GM12878 (cell line): ENCODE measurements at regions of chr5 and their contacts with region 1.

Region 1: DNA sequence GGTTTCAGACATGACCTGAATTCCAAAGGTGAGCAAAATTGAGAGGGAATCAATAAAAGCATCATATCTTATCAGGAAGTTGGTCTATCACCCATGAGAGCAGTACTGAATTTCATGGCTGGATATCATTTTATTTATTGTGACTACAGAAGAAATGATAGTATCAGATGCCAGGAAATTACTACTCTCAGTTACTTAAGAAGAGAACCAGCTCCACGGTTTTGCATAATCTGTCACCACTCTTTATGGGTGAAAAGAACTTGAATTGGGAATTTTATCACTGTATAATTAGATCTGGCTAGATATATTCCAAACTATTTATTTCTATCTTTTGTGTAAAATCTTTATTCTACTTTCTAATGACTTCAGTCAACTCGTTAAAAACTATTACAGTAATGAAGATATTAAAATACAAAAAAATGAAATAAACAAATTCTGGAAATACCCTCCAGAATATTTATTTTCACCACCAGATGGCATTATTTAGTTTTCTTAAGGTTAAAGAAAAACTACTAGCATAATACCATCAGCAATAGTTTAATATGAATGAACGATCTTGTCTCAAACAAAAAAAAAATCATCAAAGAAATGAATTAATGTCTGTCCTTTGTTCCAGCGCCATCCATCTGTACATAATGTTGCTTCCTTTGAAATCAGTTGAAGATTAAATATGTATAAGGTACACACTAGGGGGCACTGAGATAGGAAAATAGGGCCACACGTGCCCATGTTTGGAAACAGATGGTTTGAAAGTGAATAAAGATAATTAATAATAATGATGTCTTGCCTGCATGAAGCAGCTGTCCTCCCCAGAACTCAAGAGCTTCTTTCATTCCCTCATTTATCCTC is 84.7 kb upstream of the SLCO6A1 start:
- DNase-seq: no peak
- ATAC-seq: peak; percentile 34; the same call in 1 of the 3 replicates
- H3K4me3 ChIP-seq: no peak overlapping the region
- H3K27ac ChIP-seq: no peak overlapping the region
- H3K4me1 ChIP-seq: no peaks in the 10 kb centered on the region
- H3K27me3 ChIP-seq: no peaks in the 10 kb centered on the region
- CTCF ChIP-seq: peak in 2 of 3 experiments; percentile 23 to 32; a peak in 3 of 6 replicates
- EP300 ChIP-seq: no peak
- POLR2A ChIP-seq: no peak
- RAD21 ChIP-seq: 0 out of 2 replicates have a peak, but pooled peaks have one; percentile 6

Region 2: GRCh38 chr5:102596113-102596512 is 12.6 kb after region 1 on chr5:
- CTCF ChIA-PET with region 1: interaction called, 10 read pairs
- POLR2A ChIA-PET with region 1: no interaction called
- RAD21 ChIA-PET with region 1: interaction called, 5 read pairs
- SMC1A ChIA-PET with region 1: interaction called, 5 read pairs
- in situ Hi-C with region 1: no loop called
- intact Hi-C with region 1: no loop called
- DNase-seq: peak; percentile 26
- ATAC-seq: peak; percentile 82
- H3K4me3 ChIP-seq: no peak overlapping the region
- H3K27ac ChIP-seq: no peak overlapping the region; the same call in 1 of the 2 replicates
- H3K4me1 ChIP-seq: no peaks in the 10 kb centered on the region
- H3K27me3 ChIP-seq: no peaks in the 10 kb centered on the region
- CTCF ChIP-seq: no peak
- EP300 ChIP-seq: peak; percentile 36 to 75; a peak in 2 of 4 replicates
- POLR2A ChIP-seq: no peak
- RAD21 ChIP-seq: no peak

Region 3: DNA sequence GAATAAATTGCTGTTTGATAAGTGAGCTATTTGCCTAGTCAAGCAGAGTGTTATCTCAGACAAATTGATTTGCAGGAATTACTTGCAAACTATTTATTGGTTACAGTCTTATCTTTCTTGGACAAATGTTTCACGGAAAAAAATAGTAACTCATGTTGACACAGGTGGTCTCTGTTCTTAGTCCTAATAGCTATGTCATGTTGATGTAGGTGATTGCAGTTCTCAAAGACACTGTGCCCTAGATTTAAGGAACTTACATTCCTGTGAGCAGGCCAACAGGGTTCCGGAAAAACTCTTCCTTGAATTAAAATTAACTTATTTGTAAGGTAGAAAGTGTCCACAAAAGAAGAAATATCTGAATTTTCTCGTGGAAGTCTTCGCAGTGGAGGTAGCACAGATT is 24.9 kb after region 1 on chr5:
- CTCF ChIA-PET with region 1: interaction called, 15 read pairs
- POLR2A ChIA-PET with region 1: no interaction called
- RAD21 ChIA-PET with region 1: no interaction called
- SMC1A ChIA-PET with region 1: interaction called, 6 read pairs
- in situ Hi-C with region 1: no loop called
- intact Hi-C with region 1: no loop called
- DNase-seq: no peak
- ATAC-seq: no peak
- H3K4me3 ChIP-seq: no peak overlapping the region
- H3K27ac ChIP-seq: no peak overlapping the region
- H3K4me1 ChIP-seq: no peaks in the 10 kb centered on the region
- H3K27me3 ChIP-seq: no peaks in the 10 kb centered on the region
- CTCF ChIP-seq: no peak
- EP300 ChIP-seq: no peak
- POLR2A ChIP-seq: no peak
- RAD21 ChIP-seq: no peak

Region 4: DNA sequence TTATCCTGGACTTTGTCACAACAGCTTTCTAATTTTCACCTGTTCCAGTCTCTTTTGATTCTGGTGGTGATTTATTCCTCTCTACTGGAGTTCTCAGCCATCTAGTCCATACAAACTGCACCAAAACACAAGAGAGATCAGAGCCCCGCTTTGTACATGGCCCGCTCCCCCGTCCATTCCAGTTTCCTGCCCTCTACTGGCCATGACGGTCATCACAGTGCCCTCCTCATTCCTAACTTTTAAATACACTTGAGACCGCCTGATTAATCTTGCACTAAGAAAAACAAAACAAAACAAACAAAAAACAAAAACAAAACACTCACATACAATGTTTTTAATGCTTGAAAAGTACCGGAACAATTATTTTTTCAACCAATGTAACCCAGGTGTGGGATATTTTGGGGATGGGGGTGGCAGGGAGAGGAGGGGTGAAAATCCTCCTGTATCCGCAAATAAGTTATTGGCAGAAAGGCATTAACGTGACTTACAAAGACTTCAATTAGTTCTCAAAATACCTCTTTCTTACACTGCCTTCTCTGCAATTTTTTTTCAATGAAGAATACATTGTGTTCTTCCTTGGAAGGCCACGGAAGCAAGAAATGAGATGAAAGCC is 86.8 kb after region 1 on chr5:
- CTCF ChIA-PET with region 1: interaction called, 9 read pairs
- POLR2A ChIA-PET with region 1: no interaction called
- RAD21 ChIA-PET with region 1: interaction called, 3 read pairs
- SMC1A ChIA-PET with region 1: interaction called, 7 read pairs
- in situ Hi-C with region 1: no loop called
- intact Hi-C with region 1: loop called (anchors 1 kb)
- DNase-seq: no peak
- ATAC-seq: peak; percentile 92
- H3K4me3 ChIP-seq: no peak overlapping the region
- H3K27ac ChIP-seq: no peak overlapping the region
- H3K4me1 ChIP-seq: no peaks in the 10 kb centered on the region
- H3K27me3 ChIP-seq: no peaks in the 10 kb centered on the region
- CTCF ChIP-seq: peak; percentile 44 to 71 (median 62)
- EP300 ChIP-seq: no peak
- POLR2A ChIP-seq: no peak
- RAD21 ChIP-seq: peak; percentile 45

Region 5: DNA sequence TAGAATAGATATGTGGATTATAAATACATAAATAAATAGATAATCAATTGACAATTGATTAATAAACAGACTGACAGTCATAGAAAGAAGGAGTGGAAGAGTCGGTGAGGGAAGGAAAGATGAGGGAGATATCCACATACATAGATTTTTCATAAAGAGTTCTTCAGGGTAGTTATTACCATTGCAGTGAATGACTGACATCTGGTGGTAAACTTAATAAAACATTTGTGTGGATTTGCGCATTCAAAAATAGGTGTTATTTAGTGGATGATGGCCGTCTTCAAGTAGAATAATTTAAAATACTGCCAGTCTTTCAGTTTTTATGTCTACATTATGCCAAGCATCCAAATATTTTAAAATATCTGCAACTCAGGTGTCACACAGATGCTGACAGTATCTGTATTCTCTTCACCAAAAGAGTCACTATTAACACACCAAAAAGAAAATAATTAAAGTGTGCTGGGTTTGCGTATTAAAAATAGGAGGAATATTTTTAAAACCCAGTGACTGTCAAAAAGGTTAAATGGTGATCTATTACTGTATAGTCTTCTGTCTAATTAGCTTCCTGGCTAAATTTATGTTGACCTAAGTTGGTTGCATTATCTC is 457.7 kb after region 1 on chr5:
- CTCF ChIA-PET with region 1: interaction called, 3 read pairs
- POLR2A ChIA-PET with region 1: no interaction called
- RAD21 ChIA-PET with region 1: interaction called, 3 read pairs
- SMC1A ChIA-PET with region 1: no interaction called
- in situ Hi-C with region 1: loop called (anchors 10 kb)
- intact Hi-C with region 1: loop called (anchors 2 kb)
- DNase-seq: no peak
- ATAC-seq: peak; percentile 68
- H3K4me3 ChIP-seq: no peak overlapping the region
- H3K27ac ChIP-seq: no peak overlapping the region
- H3K4me1 ChIP-seq: no peaks in the 10 kb centered on the region
- H3K27me3 ChIP-seq: no peaks in the 10 kb centered on the region
- CTCF ChIP-seq: peak; percentile 16 to 58 (median 28); a peak in 4 of 6 replicates
- EP300 ChIP-seq: no peak
- POLR2A ChIP-seq: no peak
- RAD21 ChIP-seq: peak; percentile 79